Activated CD8-positive, alpha-beta T cell treated with anti-CD3 and anti-CD28 coated beads, Interleukin-2, amount 10 ng/mL, durations not matched to agents 7 days and 5 days (primary cell): ENCODE measurements at regions of chr9 and their contacts with region 1.

Region 1: GRCh38 chr9:128702445-128702948 is at the start of gene PKN3:
- DNase-seq: peak; percentile 91
- ATAC-seq: peak; percentile 93
- H3K4me3 Mint-ChIP-seq: peak within 1 kb of the TSS; percentile 87
- H3K27ac Mint-ChIP-seq: peak within 1 kb of the TSS; percentile 86
- H3K4me1 Mint-ChIP-seq: peaks cover 14% of the 10 kb centered on the region
- H3K27me3 Mint-ChIP-seq: no peaks in the 10 kb centered on the region
- total RNA-seq, gene PKN3: 7.6 to 8.0 TPM

Region 2: GRCh38 chr9:128684279-128685021 is 18.0 kb before region 1 on chr9:
- CTCF ChIA-PET with region 1: interaction called, 12 read pairs
- POLR2A ChIA-PET with region 1: interaction called, 6 read pairs
- DNase-seq: peak; percentile 89
- ATAC-seq: peak; percentile 66
- H3K4me3 Mint-ChIP-seq: peak overlapping the region; percentile 91
- H3K27ac Mint-ChIP-seq: peak overlapping the region; percentile 88
- H3K4me1 Mint-ChIP-seq: peaks cover 53% of the 10 kb centered on the region
- H3K27me3 Mint-ChIP-seq: no peaks in the 10 kb centered on the region

Region 3: GRCh38 chr9:128689820-128690692 is 12.4 kb before region 1 on chr9:
- CTCF ChIA-PET with region 1: interaction called, 42 read pairs
- POLR2A ChIA-PET with region 1: interaction called, 6 read pairs
- DNase-seq: peak; percentile 67
- ATAC-seq: no peak
- H3K4me3 Mint-ChIP-seq: peak overlapping the region; percentile 97
- H3K27ac Mint-ChIP-seq: peak overlapping the region; percentile 95
- H3K4me1 Mint-ChIP-seq: peaks cover 54% of the 10 kb centered on the region
- H3K27me3 Mint-ChIP-seq: no peaks in the 10 kb centered on the region

Region 4: DNA sequence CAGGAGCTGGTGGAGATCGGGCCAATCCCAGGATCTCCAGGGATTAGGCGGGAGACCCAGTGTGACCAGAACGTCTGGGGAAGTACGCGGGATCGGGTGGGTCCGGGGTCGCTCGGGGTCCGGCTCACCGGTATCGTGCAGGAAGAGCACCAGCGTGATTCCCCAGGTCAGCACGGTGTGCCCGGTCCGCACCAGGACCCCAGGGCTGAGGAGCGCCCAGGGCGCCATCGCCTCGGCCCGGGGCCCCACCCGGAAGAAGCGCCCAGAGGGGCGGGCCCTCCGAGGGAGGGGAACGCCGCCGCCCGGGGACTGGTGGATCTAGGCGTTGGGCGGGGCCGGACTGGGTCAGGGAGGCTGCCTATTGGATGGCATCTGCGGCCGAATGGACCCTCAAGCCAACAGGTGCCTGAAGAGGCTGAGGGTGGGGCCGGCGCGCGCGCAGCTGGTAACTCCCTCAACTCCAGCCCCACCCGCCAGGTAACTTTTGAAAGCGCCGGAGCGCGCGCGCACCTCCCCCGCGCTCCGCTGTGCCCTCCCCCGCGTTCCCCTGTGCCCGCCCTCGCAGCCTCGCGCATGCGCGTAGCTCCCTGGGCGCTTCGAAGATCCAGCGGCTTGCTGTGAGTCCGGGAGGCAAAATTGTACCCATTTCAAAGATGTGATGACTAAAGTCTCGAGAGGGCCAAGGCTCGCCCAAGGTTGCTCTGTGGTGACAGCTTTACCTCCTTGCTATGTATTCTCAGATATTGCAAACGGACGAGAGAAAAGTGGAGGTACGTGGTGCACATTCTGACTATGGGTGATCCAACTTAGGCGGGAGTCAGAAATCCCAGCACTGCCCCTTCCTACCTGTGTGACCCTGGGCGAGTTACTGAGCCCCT is 21.6 kb after region 1 on chr9 and contains the start of gene ZDHHC12:
- CTCF ChIA-PET with region 1: interaction called, 13 read pairs
- POLR2A ChIA-PET with region 1: interaction called, 6 read pairs
- DNase-seq: peak; percentile 100
- ATAC-seq: peak; percentile 99
- H3K4me3 Mint-ChIP-seq: peak within 1 kb of the TSS; percentile 97
- H3K27ac Mint-ChIP-seq: peak within 1 kb of the TSS; percentile 95
- H3K4me1 Mint-ChIP-seq: peaks cover 52% of the 10 kb centered on the region
- H3K27me3 Mint-ChIP-seq: no peaks in the 10 kb centered on the region
- total RNA-seq, gene ZDHHC12: 80.4 to 88.4 TPM